ENCODE measurements at regions of chr9 and their contacts with region 1.

Region 1: DNA sequence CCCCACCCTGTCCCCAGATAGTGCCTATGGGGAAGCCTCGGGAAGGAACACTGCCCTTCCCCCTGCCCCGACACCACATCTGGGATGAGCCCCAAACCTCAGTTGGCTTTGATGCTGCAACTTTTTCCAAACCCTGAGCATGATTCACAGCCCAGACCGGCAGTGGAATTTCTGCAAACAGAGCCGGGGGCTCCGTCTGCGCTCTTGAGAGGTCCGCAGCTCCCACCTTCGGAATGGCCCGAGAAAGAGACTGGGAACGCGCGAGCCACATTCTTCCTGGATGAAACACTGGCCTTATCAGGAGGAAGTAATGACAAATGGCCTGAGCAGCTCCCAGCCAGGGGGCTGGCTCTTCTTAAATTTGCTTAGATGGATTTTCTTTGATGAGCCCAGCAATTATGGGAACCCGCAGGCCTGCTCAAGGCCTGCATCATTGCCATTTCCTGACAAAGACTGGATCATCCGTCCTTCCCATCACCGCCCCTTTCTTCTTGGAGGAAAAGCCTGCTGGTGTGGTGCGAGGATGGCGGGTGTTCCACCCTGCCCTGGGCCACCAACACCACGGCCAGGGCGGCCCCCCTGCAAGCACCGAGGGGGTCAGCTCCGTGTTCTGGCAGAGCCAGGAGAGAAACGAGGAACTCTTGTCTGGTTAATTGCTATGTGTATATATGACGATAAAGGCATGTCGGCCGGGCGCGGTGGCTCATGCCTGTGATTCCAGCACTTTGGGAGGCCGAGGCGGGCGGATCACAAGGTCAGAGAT is 38.9 kb upstream of the COL5A1 start:
- DNase-seq: peak; percentile 83 to 95
- H3K4me3 ChIP-seq: 0 out of 2 replicates have a peak overlapping the region, but pooled peaks have one; percentile 14
- H3K27ac ChIP-seq: peak overlapping the region; percentile 68
- H3K4me1 ChIP-seq: peaks cover 17% of the 10 kb centered on the region
- H3K27me3 ChIP-seq: no peaks in the 10 kb centered on the region; the same call in 1 of the 2 replicates
- CTCF ChIP-seq: no peak

Region 2: GRCh38 chr9:134551650-134552348 is 50.9 kb before region 1 on chr9:
- CTCF ChIA-PET with region 1: interaction called, 4 read pairs
- POLR2A ChIA-PET with region 1: no interaction called
- intact Hi-C with region 1: loop called (anchors 1 kb)
- DNase-seq: peak; percentile 52 to 81
- H3K4me3 ChIP-seq: no peak overlapping the region
- H3K27ac ChIP-seq: no peak overlapping the region
- H3K4me1 ChIP-seq: peaks cover 11% of the 10 kb centered on the region
- H3K27me3 ChIP-seq: peaks cover 31% of the 10 kb centered on the region; the same call in 1 of the 2 replicates
- CTCF ChIP-seq: no peak

Region 3: DNA sequence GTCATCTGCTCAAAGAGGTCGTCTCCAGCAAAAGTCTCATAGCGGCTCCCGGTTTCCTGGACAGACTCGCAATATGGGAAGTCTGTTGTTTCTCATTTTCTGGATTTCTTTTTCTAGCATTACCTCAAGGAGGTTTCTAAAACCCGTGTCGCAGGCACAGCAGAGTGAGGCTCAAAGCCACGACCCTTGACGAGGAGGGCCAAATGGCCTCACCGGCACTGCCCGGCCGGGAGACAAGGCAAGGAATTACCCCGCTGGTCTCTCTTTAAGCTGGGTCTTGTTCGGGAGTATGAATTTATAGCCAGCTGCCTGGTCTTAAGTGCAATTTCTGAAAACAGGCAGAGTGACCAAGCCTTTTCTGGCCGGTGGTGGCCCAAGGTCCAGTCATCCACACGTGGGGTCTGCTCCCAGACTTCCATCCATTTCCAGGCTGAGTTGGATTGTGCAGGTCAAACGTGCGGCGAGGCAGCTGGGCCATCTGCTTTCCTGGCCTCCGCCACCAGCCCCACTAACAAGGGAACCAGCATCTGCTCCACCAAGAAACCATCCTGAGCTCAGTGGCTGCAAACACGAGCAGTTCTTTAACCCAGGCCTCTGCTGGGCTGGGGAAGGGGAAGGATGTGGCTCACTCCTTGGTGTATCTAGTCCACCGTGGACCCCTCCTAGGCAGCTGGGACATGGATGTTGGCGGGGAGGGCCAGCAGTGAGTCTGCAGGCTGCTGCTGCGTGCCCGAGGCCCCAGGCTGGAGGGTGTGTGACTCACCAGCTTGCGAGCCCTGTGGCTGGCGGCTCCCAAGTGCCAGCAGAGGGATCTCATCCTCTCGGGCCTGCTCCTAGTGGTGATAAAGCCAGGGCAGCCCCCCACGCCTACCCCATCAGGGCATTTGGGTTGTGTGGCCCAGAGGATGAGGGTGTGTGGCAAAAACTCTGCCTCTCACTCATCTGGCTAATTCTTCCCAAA is 16.7 kb before region 1 on chr9:
- CTCF ChIA-PET with region 1: no interaction called
- POLR2A ChIA-PET with region 1: no interaction called
- intact Hi-C with region 1: no loop called
- DNase-seq: peak in 1 of 2 experiments; percentile 58
- H3K4me3 ChIP-seq: no peak overlapping the region
- H3K27ac ChIP-seq: no peak overlapping the region
- H3K4me1 ChIP-seq: no peaks in the 10 kb centered on the region
- H3K27me3 ChIP-seq: peaks cover 7% of the 10 kb centered on the region; the same call in 1 of the 2 replicates
- CTCF ChIP-seq: no peak

Region 4: GRCh38 chr9:134624827-134625181 is 22.1 kb after region 1 on chr9:
- CTCF ChIA-PET with region 1: no interaction called
- POLR2A ChIA-PET with region 1: interaction called, 3 read pairs
- intact Hi-C with region 1: loop called (anchors 1 kb)
- DNase-seq: peak in 1 of 2 experiments; percentile 76
- H3K4me3 ChIP-seq: no peak overlapping the region
- H3K27ac ChIP-seq: no peak overlapping the region
- H3K4me1 ChIP-seq: peaks cover 23% of the 10 kb centered on the region
- H3K27me3 ChIP-seq: peaks cover 6% of the 10 kb centered on the region
- CTCF ChIP-seq: no peak

Region 5: DNA sequence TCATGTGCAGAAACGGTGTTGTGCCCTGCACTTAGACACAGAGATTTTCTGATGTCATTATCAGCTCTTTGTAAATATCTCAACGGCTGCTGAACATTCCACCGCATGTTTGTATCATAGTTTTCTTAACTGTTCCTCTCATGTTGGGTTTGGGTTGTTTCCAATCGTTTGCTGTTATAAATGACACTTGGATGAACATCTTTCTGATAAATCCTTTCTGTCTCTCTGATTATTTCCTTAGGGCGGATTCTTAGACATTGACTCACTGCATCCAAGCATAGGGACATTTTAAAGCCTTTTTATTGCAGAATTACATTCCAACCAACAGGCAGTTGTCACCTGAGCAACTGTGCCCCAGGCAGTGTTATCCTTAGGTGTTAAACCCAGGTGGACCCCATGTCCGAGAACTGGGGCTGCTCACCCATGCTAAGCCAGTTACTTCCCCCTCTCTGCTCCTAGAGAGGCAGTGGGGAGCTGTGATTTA is 67.4 kb after region 1 on chr9:
- CTCF ChIA-PET with region 1: no interaction called
- POLR2A ChIA-PET with region 1: no interaction called
- intact Hi-C with region 1: loop called (anchors 5 kb)
- DNase-seq: peak; percentile 67 to 73
- H3K4me3 ChIP-seq: no peak overlapping the region
- H3K27ac ChIP-seq: no peak overlapping the region
- H3K4me1 ChIP-seq: peaks cover 9% of the 10 kb centered on the region; the same call in 1 of the 2 replicates
- H3K27me3 ChIP-seq: peaks cover 17% of the 10 kb centered on the region; the same call in 1 of the 2 replicates
- CTCF ChIP-seq: no peak

Region 6: GRCh38 chr9:136538599-136539426 is 1936.1 kb after region 1 on chr9:
- CTCF ChIA-PET with region 1: no interaction called
- POLR2A ChIA-PET with region 1: no interaction called
- intact Hi-C with region 1: no loop called
- DNase-seq: no peak
- H3K4me3 ChIP-seq: no peak overlapping the region
- H3K27ac ChIP-seq: 0 out of 2 replicates have a peak overlapping the region, but pooled peaks have one; percentile 42
- H3K4me1 ChIP-seq: peaks cover 14% of the 10 kb centered on the region
- H3K27me3 ChIP-seq: no peaks in the 10 kb centered on the region
- CTCF ChIP-seq: no peak

Measured in PC-9 (cell line).